PC-9 (cell line): ENCODE measurements at regions of chr17 and their contacts with region 1.

Region 1: DNA sequence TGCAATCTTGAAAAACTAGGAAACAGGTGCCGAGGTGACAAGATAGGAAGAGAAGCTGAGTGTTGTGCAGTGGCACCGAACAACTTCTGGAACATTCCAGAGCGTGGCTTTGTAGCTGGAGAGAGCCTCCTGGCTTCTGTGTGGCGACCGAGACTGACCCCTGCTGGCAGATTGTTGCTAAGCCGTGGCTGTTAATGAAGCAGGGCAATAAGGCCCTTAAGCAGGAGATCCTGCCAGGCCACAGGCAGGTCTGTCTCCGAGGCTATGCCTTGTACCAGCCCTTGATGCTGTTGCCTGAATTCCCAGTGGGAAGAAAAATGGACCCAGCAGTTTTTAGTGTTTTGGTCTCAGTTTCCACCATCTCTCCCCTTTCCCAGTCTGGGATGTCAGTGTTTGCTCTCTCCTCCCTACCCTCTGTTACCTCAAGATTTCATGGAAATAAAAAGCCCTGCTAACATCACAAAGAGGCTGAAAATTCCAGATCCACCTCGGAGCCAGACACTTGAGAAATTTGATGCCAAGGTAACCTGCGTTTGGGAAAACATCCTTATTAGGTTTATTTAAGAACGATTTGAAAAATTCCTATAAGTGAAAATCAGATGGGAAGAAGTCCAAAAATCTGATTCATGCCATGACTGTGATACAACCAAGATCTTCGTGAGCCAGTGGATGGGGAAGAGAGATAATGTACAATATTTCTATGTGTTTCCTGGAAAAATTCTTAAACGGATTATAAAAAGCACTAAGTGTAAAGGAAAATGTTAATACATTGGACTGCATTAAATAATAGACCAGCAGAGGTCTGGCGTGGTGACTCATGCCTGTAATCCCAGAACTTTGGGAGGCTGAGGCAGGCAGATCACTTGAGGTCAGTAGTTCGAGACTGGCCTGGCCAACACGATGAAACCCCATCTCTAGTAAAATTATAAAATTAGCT is 265.1 kb downstream of the PRKCA start:
- DNase-seq: peak; percentile 71 to 95
- H3K4me3 ChIP-seq: no peak overlapping the region
- H3K27ac ChIP-seq: peak overlapping the region; percentile 53
- H3K4me1 ChIP-seq: peaks cover 34% of the 10 kb centered on the region
- H3K27me3 ChIP-seq: no peaks in the 10 kb centered on the region
- CTCF ChIP-seq: peak; percentile 86

Region 2: GRCh38 chr17:66275651-66276050 is 291.9 kb before region 1 on chr17:
- CTCF ChIA-PET with region 1: interaction called, 3 read pairs
- POLR2A ChIA-PET with region 1: no interaction called
- intact Hi-C with region 1: loop called (anchors 5 kb)
- DNase-seq: peak; percentile 80 to 98
- H3K4me3 ChIP-seq: peak overlapping the region; percentile 29; the same call in 1 of the 2 replicates
- H3K27ac ChIP-seq: peak overlapping the region; percentile 82
- H3K4me1 ChIP-seq: peaks cover 73% of the 10 kb centered on the region
- H3K27me3 ChIP-seq: no peaks in the 10 kb centered on the region
- CTCF ChIP-seq: no peak

Region 3: GRCh38 chr17:66383333-66383732 is 184.2 kb before region 1 on chr17:
- CTCF ChIA-PET with region 1: no interaction called
- POLR2A ChIA-PET with region 1: no interaction called
- intact Hi-C with region 1: loop called (anchors 1 kb)
- DNase-seq: no peak
- H3K4me3 ChIP-seq: no peak overlapping the region
- H3K27ac ChIP-seq: no peak overlapping the region
- H3K4me1 ChIP-seq: peaks cover 36% of the 10 kb centered on the region
- H3K27me3 ChIP-seq: no peaks in the 10 kb centered on the region
- CTCF ChIP-seq: no peak

Region 4: GRCh38 chr17:66636111-66636510 is 68.6 kb after region 1 on chr17:
- CTCF ChIA-PET with region 1: no interaction called
- POLR2A ChIA-PET with region 1: no interaction called
- intact Hi-C with region 1: loop called (anchors 5 kb)
- DNase-seq: peak; percentile 39 to 87
- H3K4me3 ChIP-seq: no peak overlapping the region
- H3K27ac ChIP-seq: peak overlapping the region; percentile 61
- H3K4me1 ChIP-seq: peaks cover 64% of the 10 kb centered on the region
- H3K27me3 ChIP-seq: no peaks in the 10 kb centered on the region
- CTCF ChIP-seq: no peak

Region 5: DNA sequence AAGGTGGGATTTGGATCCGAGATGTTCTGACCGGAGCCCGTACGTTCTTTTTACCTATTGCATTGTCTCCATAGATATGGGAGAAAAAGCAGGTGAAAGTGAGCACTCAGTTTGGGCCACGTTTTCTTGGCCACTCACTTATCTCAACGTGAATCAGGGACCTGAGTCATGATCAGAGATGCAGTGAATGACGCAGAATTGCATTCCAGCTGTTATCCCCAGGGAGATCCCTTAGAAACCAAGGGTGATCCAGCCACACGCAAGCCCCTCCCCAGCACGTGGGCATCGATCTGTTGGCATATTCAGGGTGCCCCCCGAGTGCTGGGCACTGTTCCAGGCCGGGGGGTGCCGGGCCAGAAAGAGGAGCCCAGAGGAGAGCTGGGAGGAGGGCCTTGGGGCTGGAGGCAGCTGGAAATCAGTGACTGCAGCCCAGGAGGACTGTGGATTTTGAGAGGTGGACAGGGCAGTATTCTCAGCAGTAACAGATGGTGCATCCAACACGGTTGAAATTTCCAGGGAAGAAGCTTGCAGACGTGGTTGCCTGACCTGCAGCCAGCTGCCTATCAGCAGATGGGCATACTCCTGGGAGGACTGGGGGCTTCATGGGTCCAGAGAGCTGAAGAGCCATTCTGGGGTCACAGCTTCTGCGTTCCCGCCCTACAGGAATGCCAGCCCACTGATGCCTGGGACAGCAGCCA is 180.2 kb after region 1 on chr17:
- CTCF ChIA-PET with region 1: no interaction called
- POLR2A ChIA-PET with region 1: no interaction called
- intact Hi-C with region 1: no loop called
- DNase-seq: no peak
- H3K4me3 ChIP-seq: no peak overlapping the region
- H3K27ac ChIP-seq: no peak overlapping the region
- H3K4me1 ChIP-seq: no peaks in the 10 kb centered on the region
- H3K27me3 ChIP-seq: no peaks in the 10 kb centered on the region
- CTCF ChIP-seq: no peak

Region 6: DNA sequence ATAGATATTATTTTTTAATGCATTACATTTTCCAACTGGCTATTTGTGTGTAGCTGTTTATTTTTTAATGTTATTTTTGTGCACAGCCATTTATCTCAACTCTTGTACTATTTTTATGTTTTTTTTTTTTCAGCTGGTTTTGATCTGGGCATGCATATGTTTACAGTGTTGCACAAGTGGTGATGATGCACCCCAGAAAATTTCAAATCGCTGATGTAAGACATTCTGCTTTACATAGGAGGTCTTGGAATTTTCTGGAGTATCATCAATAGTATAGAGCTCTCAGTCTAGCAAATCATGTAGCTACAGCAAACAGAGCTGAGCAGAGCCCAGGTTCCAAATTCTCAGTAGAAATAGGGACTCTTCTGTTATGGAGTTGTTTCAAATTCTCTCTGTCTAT is 297.6 kb after region 1 on chr17:
- CTCF ChIA-PET with region 1: no interaction called
- POLR2A ChIA-PET with region 1: no interaction called
- intact Hi-C with region 1: no loop called
- DNase-seq: no peak
- H3K4me3 ChIP-seq: no peak overlapping the region
- H3K27ac ChIP-seq: no peak overlapping the region
- H3K4me1 ChIP-seq: no peaks in the 10 kb centered on the region
- H3K27me3 ChIP-seq: peaks cover 26% of the 10 kb centered on the region
- CTCF ChIP-seq: no peak